Activated CD8-positive, alpha-beta T cell treated with anti-CD3 and anti-CD28 coated beads, Interleukin-2, amount 10 ng/mL, durations not matched to agents 7 days and 5 days (primary cell): ENCODE measurements at regions of chr1 and their contacts with region 1.

Region 1: DNA sequence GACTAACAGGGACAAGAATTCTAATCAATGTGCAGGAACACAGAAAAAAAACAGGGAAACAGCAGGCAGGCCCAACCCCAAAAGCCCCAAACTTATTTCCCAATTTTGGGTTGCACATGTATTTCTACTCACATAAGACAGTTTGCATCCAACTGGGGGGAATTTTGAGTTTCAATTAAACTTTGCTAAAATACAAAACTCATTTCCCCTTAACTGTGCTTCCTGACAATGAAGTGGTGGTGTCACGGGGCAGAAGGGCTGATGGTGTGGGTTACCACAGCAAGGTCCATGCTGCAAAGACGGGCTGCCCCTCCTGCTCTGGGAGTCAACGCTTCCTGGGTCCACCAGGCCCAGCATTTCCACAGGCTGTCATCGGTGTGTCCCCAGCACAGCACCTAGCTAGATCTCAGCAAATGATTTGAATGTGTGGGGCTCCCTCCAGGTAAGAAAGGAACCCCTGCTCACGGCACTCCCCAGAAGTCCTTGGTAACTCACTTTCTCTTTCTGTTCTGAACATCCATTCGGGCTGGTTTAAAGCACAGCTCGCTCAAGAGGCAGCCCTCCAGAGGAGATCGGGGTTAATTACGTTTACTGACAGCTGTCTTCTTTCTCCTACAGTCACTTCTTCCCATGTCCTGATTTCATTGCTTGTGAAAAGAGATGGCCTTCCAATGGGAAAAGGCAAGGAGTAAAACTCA is 27.4 kb downstream of the HIVEP3 start:
- DNase-seq: peak; percentile 81
- ATAC-seq: peak; percentile 96
- H3K4me3 Mint-ChIP-seq: peak overlapping the region; percentile 79
- H3K27ac Mint-ChIP-seq: peak overlapping the region; percentile 91
- H3K4me1 Mint-ChIP-seq: peaks cover 68% of the 10 kb centered on the region
- H3K27me3 Mint-ChIP-seq: no peaks in the 10 kb centered on the region

Region 2: DNA sequence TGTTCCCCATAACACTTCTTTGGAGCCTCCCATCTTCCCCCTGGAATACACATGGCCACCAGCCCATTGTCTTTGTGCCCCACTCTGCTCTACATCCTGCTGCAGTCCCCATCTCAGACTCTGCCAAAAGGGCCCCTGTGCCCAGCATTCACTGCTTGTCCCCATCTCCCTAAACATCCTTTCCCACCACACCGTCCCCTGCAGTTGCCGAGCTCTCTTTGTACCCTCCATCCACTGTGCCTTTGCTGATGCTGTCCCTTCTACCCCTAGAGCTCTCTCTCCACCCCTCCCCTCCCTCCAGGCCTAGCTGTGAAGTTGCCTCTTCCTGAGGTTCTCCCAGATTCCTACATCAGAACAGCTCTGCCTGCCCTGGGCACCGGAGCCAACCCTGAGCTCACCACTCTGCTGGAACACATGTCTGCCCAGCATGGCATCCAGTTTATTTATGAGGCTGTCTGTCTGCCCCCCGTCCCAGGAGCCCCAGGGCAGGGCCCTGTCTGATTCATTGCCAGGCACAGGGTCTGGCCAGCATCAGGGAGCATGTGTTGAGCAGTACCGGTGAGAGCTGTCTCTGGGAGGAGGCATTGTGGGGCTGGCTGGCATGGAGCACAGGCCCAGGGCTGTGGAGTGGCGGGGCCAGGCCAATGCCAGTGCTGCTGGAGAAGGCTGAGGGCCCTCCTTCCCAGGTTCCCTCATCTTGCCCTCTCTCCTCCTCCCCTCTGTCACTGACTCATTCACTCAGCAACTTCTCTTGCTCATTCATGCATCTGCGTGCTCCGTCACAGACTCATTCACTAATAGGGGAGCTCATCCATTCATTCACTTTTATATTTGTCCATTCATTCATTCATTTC is 435.6 kb before region 1 on chr1:
- CTCF ChIA-PET with region 1: no interaction called
- POLR2A ChIA-PET with region 1: no interaction called
- DNase-seq: no peak
- ATAC-seq: no peak
- H3K4me3 Mint-ChIP-seq: no peak overlapping the region
- H3K27ac Mint-ChIP-seq: no peak overlapping the region
- H3K4me1 Mint-ChIP-seq: no peaks in the 10 kb centered on the region
- H3K27me3 Mint-ChIP-seq: no peaks in the 10 kb centered on the region

Region 3: DNA sequence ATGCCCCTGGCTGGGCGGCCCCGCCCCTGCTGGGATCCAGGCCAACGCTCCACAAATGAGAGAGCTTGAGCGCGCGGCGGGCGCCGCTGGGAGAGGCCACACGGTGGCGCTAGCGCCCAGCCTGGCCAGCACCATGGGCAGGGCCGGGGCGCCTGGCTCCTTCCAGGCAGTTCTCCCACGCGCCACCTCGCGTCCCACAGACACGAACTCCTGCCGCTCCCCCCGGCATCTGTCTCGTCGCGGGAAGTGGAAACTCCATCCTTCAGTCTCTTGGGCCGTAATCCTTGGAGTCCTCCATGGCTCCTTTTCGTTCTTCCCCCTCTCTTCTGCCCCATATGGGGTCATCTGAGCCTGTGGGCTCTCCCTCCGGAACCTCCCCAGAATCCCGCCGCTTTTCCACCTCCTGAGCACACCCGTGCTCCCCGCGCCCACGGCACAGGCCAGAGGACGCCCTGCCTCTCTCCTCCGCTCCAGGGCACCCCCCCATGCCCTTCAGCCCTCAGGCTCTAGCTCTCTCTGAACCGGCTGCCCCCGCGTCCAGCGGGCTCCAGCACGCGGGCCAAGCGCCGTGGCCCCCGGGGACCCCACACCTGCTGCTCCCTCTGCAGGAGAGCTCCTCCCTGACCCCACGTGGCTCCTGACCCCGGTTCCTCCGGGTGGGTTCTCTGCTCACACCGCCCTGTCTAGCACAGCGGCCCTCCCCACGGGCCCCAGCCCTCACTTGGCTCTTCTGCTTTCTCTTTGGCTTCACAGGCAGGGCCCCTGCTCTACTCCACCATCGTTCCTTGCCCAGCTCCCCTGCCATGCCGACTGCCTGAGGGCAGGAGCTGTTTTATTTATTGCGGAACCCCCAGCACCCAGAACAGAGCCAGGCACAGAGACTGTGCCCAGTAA is 374.9 kb before region 1 on chr1:
- CTCF ChIA-PET with region 1: interaction called, 10 read pairs
- POLR2A ChIA-PET with region 1: interaction called, 3 read pairs
- DNase-seq: peak; percentile 67
- ATAC-seq: peak; percentile 91
- H3K4me3 Mint-ChIP-seq: no peak overlapping the region
- H3K27ac Mint-ChIP-seq: no peak overlapping the region
- H3K4me1 Mint-ChIP-seq: no peaks in the 10 kb centered on the region
- H3K27me3 Mint-ChIP-seq: no peaks in the 10 kb centered on the region

Region 4: GRCh38 chr1:41662061-41662764 is 229.1 kb before region 1 on chr1:
- CTCF ChIA-PET with region 1: interaction called, 12 read pairs
- POLR2A ChIA-PET with region 1: no interaction called
- DNase-seq: peak; percentile 84
- ATAC-seq: peak; percentile 88
- H3K4me3 Mint-ChIP-seq: peak overlapping the region; percentile 47
- H3K27ac Mint-ChIP-seq: peak overlapping the region; percentile 21
- H3K4me1 Mint-ChIP-seq: peaks cover 82% of the 10 kb centered on the region
- H3K27me3 Mint-ChIP-seq: no peaks in the 10 kb centered on the region

Region 5: DNA sequence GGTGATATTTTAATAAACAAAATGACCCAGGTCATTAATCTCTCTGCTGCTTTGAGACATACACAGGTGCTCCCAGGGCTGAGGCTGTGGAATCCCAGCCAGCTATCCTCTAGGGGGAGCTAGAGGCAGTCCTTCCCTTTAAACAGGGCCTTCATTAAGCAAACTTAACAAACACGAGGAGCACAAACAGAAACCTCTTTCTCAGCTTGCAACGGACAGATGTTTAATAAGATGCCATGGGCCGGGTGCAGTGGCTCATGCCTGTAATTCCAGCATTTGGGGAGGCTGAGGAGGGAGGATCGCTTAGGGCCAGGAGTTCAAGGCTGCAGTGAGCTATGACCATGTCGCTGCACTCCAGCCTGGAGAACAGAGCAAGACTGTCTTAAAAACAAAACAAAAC is 79.3 kb before region 1 on chr1:
- CTCF ChIA-PET with region 1: interaction called, 24 read pairs
- POLR2A ChIA-PET with region 1: no interaction called
- DNase-seq: peak; percentile 75
- ATAC-seq: peak; percentile 50
- H3K4me3 Mint-ChIP-seq: no peak overlapping the region
- H3K27ac Mint-ChIP-seq: peak overlapping the region; percentile 1
- H3K4me1 Mint-ChIP-seq: peaks cover 41% of the 10 kb centered on the region
- H3K27me3 Mint-ChIP-seq: peaks cover under 1% of the 10 kb centered on the region

Region 6: DNA sequence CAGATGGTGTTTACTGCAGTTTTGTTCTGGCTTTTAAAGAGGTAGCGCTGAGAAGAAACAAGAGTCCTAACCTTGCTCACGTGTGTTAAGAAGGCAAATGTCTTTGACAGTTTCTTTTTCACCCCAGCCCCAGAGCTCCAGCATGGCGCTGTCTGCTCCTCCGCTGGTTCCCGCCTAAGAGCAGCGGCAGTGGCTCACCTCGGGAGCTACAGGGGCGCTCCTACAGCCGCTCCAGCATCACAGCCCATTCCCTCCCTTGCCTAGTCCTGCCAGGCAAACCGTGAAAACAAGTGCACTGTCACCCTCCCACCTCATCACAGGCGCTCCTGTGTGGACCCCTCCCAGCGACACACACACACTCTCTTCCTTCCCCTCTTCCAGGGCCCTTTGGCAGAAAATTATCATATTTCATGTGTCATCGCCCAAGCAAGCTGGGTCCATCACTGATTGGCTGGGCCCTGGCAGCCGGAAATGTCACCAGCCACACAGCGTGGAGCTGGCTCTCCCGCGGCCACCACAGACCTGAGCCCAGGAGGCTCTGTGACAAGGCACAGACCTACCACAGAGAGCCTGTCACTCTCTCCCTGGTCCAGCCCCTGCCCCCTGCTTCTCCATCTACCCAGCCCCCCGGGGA is 28.5 kb after region 1 on chr1:
- CTCF ChIA-PET with region 1: interaction called, 71 read pairs
- POLR2A ChIA-PET with region 1: interaction called, 26 read pairs
- DNase-seq: peak; percentile 91
- ATAC-seq: peak; percentile 95
- H3K4me3 Mint-ChIP-seq: peak overlapping the region; percentile 95
- H3K27ac Mint-ChIP-seq: peak overlapping the region; percentile 98
- H3K4me1 Mint-ChIP-seq: peaks cover 56% of the 10 kb centered on the region
- H3K27me3 Mint-ChIP-seq: peaks cover 8% of the 10 kb centered on the region

Region 7: GRCh38 chr1:41980827-41981653 is 89.7 kb after region 1 on chr1:
- CTCF ChIA-PET with region 1: interaction called, 10 read pairs
- POLR2A ChIA-PET with region 1: no interaction called
- DNase-seq: peak; percentile 62
- ATAC-seq: peak; percentile 95
- H3K4me3 Mint-ChIP-seq: peak overlapping the region; percentile 49
- H3K27ac Mint-ChIP-seq: peak overlapping the region; percentile 75
- H3K4me1 Mint-ChIP-seq: peaks cover 29% of the 10 kb centered on the region
- H3K27me3 Mint-ChIP-seq: no peaks in the 10 kb centered on the region